SK-N-SH (cell line): ENCODE measurements at regions of chr7 and their contacts with region 1.

Region 1: DNA sequence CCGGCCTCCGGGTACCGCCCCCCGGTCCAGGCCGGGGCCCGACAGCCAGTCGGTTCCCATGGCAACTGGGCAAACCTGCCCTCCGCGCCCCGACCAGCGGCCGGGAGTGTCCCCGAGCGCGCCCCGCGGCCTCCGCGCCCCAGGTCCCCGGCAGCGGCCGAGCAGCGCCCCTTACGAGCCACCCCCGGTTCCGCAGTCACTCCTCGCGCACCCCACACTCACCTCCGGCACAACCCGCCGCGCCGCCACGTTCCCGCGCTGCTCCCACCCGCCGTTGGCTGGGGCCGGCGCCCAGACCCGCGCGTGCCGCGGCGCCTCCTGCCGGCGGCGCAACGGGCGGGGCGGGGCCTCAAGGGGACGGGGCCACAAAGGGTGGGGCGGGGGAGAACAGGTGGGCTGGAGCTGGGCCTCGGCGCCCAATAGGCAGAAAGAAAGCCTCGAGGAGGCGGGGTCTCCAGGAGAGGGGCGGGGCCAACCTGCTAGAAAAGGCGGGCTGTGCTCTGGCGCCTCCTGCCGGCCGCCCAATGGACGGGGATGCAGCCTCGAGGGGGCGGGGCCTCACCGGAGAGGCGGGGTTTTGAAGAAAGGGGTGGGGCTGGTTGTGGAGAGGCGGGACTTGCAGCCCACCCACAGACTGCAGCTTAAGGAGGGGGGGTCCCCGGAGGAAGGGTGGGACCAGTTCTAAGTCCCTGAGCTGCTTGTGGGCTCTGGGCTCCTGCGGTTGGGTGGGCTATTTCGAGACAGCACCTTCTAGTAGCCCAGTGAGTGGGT is at the start of gene RADIL:
- DNase-seq: peak; percentile 100
- H3K4me3 ChIP-seq: peak within 1 kb of the TSS; percentile 70 to 75
- H3K27ac ChIP-seq: peak within 1 kb of the TSS; percentile 89 to 97
- H3K4me1 ChIP-seq: peaks cover 5 to 31% of the 10 kb centered on the region in 2 experiments; a peak in 1 of 4 replicates
- H3K27me3 ChIP-seq: no peaks in the 10 kb centered on the region
- CTCF ChIP-seq: peak; percentile 98
- EP300 ChIP-seq: no peak
- RAD21 ChIP-seq: peak; percentile 85
- polyA plus RNA-seq, gene RADIL: 3.5 and 4.3 TPM in 2 replicates

Region 2: GRCh38 chr7:4791738-4792536 is 91.6 kb before region 1 on chr7:
- CTCF ChIA-PET with region 1: interaction called, 63 read pairs
- POLR2A ChIA-PET with region 1: no interaction called
- DNase-seq: peak; percentile 96
- H3K4me3 ChIP-seq: no peak overlapping the region; a peak in 1 of 4 replicates
- H3K27ac ChIP-seq: no peak overlapping the region
- H3K4me1 ChIP-seq: no peaks in the 10 kb centered on the region
- H3K27me3 ChIP-seq: no peaks in the 10 kb centered on the region
- CTCF ChIP-seq: peak; percentile 61
- EP300 ChIP-seq: no peak
- RAD21 ChIP-seq: no peak

Region 3: DNA sequence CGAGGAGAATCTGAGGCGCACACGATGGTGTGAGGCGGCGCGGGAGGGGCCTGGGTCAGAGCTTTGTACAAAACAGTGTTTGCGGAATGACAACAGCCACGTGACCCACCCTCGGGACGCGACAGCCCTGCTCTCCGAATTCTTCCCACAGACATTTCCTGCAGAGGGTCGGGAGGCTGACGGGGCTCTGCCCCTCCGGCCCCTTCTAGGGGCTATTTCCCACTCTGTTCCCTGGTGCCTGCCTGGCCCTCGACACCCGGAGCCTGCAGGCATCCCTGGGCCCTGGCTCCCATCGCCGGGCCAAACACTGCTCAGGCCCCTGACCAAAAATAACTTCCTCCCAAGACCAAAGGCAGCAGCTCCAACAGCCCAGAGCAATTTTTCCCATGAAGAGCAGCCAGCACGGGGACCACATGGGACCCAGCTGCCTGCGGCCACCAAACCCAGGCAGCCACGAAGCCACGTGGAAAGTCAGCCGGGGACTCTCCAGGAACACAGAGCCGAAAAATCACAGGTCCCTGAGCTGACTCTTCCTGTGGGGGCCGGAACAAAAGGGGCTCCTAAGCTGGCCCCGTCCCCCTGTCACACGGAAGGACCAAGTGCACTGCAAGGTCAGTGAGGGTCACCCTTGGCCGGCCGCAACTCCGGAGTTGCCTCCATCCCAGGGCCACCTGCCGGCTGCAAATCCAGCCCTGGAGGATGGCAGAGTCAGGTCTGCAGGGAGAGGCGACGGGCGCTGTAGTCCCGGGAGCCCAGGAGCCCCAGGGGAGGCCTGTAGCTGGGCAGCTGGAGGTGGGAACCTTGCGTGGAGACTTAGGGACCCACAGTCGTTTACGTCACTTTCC is 63.8 kb before region 1 on chr7:
- CTCF ChIA-PET with region 1: interaction called, 38 read pairs
- POLR2A ChIA-PET with region 1: no interaction called
- DNase-seq: peak; percentile 41
- H3K4me3 ChIP-seq: no peak overlapping the region
- H3K27ac ChIP-seq: no peak overlapping the region
- H3K4me1 ChIP-seq: no peaks in the 10 kb centered on the region; a peak in 1 of 4 replicates
- H3K27me3 ChIP-seq: no peaks in the 10 kb centered on the region
- CTCF ChIP-seq: no peak
- EP300 ChIP-seq: no peak
- RAD21 ChIP-seq: no peak

Region 4: GRCh38 chr7:4849369-4849768 is 34.2 kb before region 1 on chr7:
- CTCF ChIA-PET with region 1: interaction called, 645 read pairs
- POLR2A ChIA-PET with region 1: interaction called, 18 read pairs
- DNase-seq: peak; percentile 81
- H3K4me3 ChIP-seq: no peak overlapping the region
- H3K27ac ChIP-seq: peak overlapping the region in 1 of 2 experiments; percentile 5; a peak in 1 of 4 replicates
- H3K4me1 ChIP-seq: peaks cover 0 to 19% of the 10 kb centered on the region in 2 experiments; a peak in 2 of 4 replicates
- H3K27me3 ChIP-seq: no peaks in the 10 kb centered on the region
- CTCF ChIP-seq: peak; percentile 51
- EP300 ChIP-seq: peak in 1 of 2 experiments; percentile 45; a peak in 1 of 4 replicates
- RAD21 ChIP-seq: peak; percentile 95

Region 5: DNA sequence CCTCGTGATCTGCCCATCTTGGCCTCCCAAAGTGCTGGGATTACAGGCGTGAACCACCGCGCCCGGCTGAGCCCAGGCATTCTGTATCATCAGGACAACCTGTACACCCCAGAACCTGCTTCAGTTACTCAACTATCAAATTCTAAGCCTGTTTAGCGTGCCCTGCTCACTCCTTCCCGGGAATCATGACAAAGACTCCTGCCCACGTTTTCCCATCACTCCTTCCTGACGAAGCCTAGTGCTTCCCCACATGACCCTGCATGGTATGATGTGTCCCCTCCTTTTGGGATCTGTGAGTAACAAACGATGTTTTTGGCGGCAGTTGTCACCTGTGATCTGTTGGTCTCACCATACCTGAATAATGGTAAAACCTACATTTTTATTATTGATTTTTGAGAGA is 12.2 kb after region 1 on chr7:
- CTCF ChIA-PET with region 1: interaction called, 50 read pairs
- POLR2A ChIA-PET with region 1: no interaction called
- DNase-seq: no peak
- H3K4me3 ChIP-seq: no peak overlapping the region
- H3K27ac ChIP-seq: no peak overlapping the region
- H3K4me1 ChIP-seq: no peaks in the 10 kb centered on the region
- H3K27me3 ChIP-seq: no peaks in the 10 kb centered on the region
- CTCF ChIP-seq: no peak
- EP300 ChIP-seq: no peak
- RAD21 ChIP-seq: no peak

Region 6: GRCh38 chr7:4973728-4974198 is 90.2 kb after region 1 on chr7:
- CTCF ChIA-PET with region 1: interaction called, 19 read pairs
- POLR2A ChIA-PET with region 1: no interaction called
- DNase-seq: peak; percentile 96
- H3K4me3 ChIP-seq: peak overlapping the region; percentile 66 to 95
- H3K27ac ChIP-seq: peak overlapping the region; percentile 79 to 86
- H3K4me1 ChIP-seq: no peaks in the 10 kb centered on the region; a peak in 2 of 4 replicates
- H3K27me3 ChIP-seq: no peaks in the 10 kb centered on the region
- CTCF ChIP-seq: peak; percentile 85
- EP300 ChIP-seq: no peak
- RAD21 ChIP-seq: peak; percentile 71

Region 7: GRCh38 chr7:5094641-5095040 is 211.1 kb after region 1 on chr7:
- CTCF ChIA-PET with region 1: interaction called, 10 read pairs
- POLR2A ChIA-PET with region 1: no interaction called
- DNase-seq: no peak
- H3K4me3 ChIP-seq: no peak overlapping the region
- H3K27ac ChIP-seq: no peak overlapping the region
- H3K4me1 ChIP-seq: no peaks in the 10 kb centered on the region
- H3K27me3 ChIP-seq: no peaks in the 10 kb centered on the region
- CTCF ChIP-seq: no peak
- EP300 ChIP-seq: no peak
- RAD21 ChIP-seq: no peak